ENCODE measurements at regions of chr17 and their contacts with region 1.

Region 1: GRCh38 chr17:80426681-80427326 is 11.8 kb downstream of the ENDOV start:
- DNase-seq: peak; percentile 12
- ATAC-seq: peak; percentile 99
- H3K4me3 ChIP-seq: no peak overlapping the region
- H3K27ac ChIP-seq: no peak overlapping the region
- H3K4me1 ChIP-seq: peaks cover 3% of the 10 kb centered on the region
- H3K27me3 ChIP-seq: no peaks in the 10 kb centered on the region
- CTCF ChIP-seq: peak; percentile 95 to 99 (median 98); a peak in 5 of 6 replicates
- EP300 ChIP-seq: no peak
- POLR2A ChIP-seq: no peak
- RAD21 ChIP-seq: peak; percentile 97

Region 2: DNA sequence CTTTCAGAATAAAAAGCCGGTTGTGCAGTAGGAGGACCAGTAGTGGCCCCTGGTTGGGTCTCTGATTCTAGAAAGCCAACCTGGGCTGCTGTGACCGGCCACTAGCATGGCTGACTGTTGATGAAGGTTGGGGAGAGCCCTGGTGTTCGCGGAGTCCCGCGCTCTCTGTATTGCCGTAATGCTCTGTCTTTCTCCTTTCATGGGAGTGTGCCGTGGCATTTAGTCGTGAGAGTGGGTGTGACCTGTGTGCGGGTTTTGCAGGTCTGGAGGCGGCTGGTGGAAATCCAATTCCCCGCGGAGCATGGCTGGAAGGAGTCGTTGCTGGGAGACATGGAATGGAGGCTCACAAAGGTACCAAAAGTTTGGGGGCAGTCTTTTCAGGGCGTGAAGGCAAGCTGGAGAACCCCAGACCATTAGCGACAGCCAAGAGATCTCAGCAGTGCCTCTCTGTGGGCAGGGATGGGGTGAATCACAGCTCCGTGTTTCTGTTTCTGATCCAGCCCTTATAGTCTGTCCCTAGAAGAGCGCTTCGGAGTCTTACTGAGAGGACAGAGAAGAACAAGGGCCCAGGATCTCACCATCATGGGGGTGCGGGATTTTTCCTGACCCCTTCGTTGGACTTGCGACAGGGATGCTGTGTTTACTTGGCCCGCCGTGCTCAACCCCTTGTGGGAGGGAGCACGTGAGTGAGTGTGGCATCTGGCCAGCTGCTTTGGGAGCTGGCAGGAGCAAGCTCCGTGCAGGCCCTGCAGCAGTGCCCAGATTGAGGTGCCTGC is 109.7 kb before region 1 on chr17:
- CTCF ChIA-PET with region 1: no interaction called
- POLR2A ChIA-PET with region 1: no interaction called
- RAD21 ChIA-PET with region 1: no interaction called
- SMC1A ChIA-PET with region 1: no interaction called
- in situ Hi-C with region 1: no loop called
- intact Hi-C with region 1: no loop called
- DNase-seq: no peak
- ATAC-seq: no peak
- H3K4me3 ChIP-seq: no peak overlapping the region
- H3K27ac ChIP-seq: no peak overlapping the region
- H3K4me1 ChIP-seq: no peaks in the 10 kb centered on the region
- H3K27me3 ChIP-seq: no peaks in the 10 kb centered on the region
- CTCF ChIP-seq: no peak
- EP300 ChIP-seq: no peak
- POLR2A ChIP-seq: no peak
- RAD21 ChIP-seq: no peak

Region 3: GRCh38 chr17:80454557-80455335 is 27.9 kb after region 1 on chr17:
- CTCF ChIA-PET with region 1: interaction called, 3 read pairs
- POLR2A ChIA-PET with region 1: no interaction called
- RAD21 ChIA-PET with region 1: interaction called, 11 read pairs
- SMC1A ChIA-PET with region 1: no interaction called
- in situ Hi-C with region 1: no loop called
- intact Hi-C with region 1: no loop called
- DNase-seq: peak; percentile 84
- ATAC-seq: peak; percentile 96
- H3K4me3 ChIP-seq: peak overlapping the region; percentile 96
- H3K27ac ChIP-seq: peak overlapping the region; percentile 89
- H3K4me1 ChIP-seq: peaks cover 8% of the 10 kb centered on the region
- H3K27me3 ChIP-seq: peaks cover 0 to 3% of the 10 kb centered on the region in 2 experiments; a peak in 1 of 4 replicates
- CTCF ChIP-seq: no peak
- EP300 ChIP-seq: 0 out of 4 replicates have a peak, but pooled peaks of 1 of the 2 experiments have one; percentile 8
- POLR2A ChIP-seq: peak; percentile 89
- RAD21 ChIP-seq: no peak

Region 4: DNA sequence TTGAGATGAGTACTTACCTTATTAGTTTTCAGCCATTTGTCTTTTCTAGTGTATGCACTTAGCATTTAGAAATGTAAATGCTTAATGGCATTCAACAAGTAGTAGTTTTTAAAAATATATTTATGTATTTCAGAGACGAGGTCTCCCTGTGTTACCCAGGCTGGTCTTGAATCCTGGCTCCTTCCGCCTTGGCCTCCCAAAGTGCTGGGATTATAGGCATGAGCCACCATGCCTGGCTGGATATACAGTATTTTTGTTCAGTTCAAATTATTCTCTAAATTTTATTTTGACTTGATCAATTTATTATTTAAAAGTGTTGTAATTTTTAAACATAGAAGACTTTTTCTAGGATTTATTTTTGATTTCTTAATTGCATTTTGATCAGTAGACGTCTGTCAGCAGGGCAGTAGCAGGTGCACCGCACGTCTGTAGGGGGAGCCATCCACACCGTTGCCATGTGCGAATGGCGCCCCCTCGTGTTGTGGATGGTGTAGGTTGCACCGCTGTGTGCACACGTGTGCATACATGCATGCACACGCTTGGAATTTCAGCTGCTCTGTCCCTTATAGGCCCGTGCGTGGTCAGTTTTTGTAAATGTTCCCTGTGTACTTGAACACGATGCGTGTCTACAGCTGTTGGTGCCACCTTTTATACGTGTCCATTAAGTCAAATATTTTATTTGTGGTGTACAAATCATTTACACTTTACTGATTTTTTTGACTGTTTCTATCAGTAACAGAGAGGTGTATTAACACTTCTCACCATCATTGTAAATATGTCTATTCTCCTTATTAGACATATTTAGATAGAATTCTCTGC is 148.5 kb after region 1 on chr17:
- CTCF ChIA-PET with region 1: interaction called, 61 read pairs
- POLR2A ChIA-PET with region 1: no interaction called
- RAD21 ChIA-PET with region 1: interaction called, 13 read pairs
- SMC1A ChIA-PET with region 1: interaction called, 15 read pairs
- in situ Hi-C with region 1: loop called (anchors 5 kb)
- intact Hi-C with region 1: loop called (anchors 1 kb)
- DNase-seq: peak; percentile 65
- ATAC-seq: peak; percentile 100
- H3K4me3 ChIP-seq: no peak overlapping the region
- H3K27ac ChIP-seq: no peak overlapping the region
- H3K4me1 ChIP-seq: no peaks in the 10 kb centered on the region
- H3K27me3 ChIP-seq: no peaks in the 10 kb centered on the region
- CTCF ChIP-seq: peak; percentile 100; a peak in 5 of 6 replicates
- EP300 ChIP-seq: no peak
- POLR2A ChIP-seq: no peak
- RAD21 ChIP-seq: peak; percentile 87

Region 5: GRCh38 chr17:80970044-80970761 is 543.4 kb after region 1 on chr17:
- CTCF ChIA-PET with region 1: interaction called, 6 read pairs
- POLR2A ChIA-PET with region 1: no interaction called
- RAD21 ChIA-PET with region 1: interaction called, 22 read pairs
- SMC1A ChIA-PET with region 1: interaction called, 6 read pairs
- in situ Hi-C with region 1: no loop called
- intact Hi-C with region 1: no loop called
- DNase-seq: no peak
- ATAC-seq: peak; percentile 95
- H3K4me3 ChIP-seq: no peak overlapping the region
- H3K27ac ChIP-seq: no peak overlapping the region
- H3K4me1 ChIP-seq: no peaks in the 10 kb centered on the region
- H3K27me3 ChIP-seq: no peaks in the 10 kb centered on the region
- CTCF ChIP-seq: peak; percentile 55 to 78 (median 73)
- EP300 ChIP-seq: no peak
- POLR2A ChIP-seq: no peak; the same call in 1 of the 2 replicates
- RAD21 ChIP-seq: peak; percentile 72